ENCODE measurements at regions of chr4 and their contacts with region 1.

Region 1: GRCh38 chr4:158722917-158723793 is at the start of gene PPID:
- DNase-seq: no peak
- H3K4me3 ChIP-seq: peak within 1 kb of the TSS; percentile 65
- H3K27me3 ChIP-seq: no peaks in the 10 kb centered on the region
- CTCF ChIP-seq: no peak
- polyA plus RNA-seq, gene PPID: 11.3 and 15.1 TPM in 2 replicates

Region 2: DNA sequence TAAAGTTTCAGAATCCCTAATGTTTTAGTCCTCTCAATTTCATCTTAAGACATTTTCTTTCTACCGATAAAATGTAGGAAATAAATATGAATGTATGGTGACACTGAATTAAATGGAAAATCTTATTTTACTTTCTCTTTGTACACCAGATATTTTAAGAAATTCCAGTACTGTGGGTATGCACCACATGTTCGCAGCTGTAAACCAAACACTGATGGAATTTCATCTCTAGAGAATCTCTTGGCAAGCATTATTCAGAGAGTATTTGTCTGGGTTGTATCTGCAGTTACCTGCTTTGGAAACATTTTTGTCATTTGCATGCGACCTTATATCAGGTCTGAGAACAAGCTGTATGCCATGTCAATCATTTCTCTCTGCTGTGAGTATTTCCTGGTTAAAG is 78.4 kb before region 1 on chr4:
- CTCF ChIA-PET with region 1: no interaction called
- POLR2A ChIA-PET with region 1: interaction called, 19 read pairs
- DNase-seq: no peak
- H3K4me3 ChIP-seq: no peak overlapping the region
- H3K27me3 ChIP-seq: no peaks in the 10 kb centered on the region; the same call in 1 of the 2 replicates
- CTCF ChIP-seq: no peak

Measured in BJ (cell line).